B cell (primary cell): ENCODE measurements at regions of chr14 and their contacts with region 1.

Region 1: DNA sequence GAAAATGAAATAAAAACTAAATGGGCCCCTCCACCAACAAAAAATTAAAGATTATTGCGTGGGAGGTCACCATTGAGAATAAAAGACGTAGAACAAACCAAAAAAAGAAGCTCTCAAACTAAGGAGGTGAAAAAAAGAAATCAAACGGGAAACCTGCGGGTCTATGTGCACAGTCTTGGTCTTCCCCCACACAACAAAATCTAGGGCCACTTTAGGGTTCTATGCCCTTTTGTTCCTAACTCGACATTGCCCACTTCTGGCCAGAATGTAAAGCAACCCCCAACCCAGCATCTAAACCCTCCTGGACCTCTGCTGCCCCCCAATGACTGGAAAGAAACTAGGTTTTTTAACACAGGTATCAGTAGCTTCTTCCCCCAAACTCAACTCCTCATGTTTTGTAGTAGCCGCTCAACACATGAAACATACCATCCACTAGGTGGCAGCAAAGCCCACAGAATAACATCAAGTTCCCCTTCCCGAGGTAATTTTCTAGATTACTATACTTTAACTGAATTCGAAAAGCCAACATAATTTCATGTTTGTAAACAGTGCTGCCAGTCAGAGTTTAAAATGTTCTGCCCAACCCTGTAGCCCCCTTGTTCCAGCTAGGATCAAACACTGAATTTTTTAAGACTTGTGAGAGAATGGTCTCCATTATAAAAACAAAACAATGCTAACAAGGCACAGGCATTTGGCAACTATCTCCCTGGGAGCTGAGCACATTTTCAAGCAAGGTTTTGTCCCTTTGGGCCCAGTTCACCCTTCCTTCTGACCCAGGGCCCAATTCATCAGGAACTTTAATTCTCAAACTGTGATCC is 18.7 kb downstream of the DAD1 start:
- DNase-seq: peak; percentile 97
- ATAC-seq: peak; percentile 90
- H3K4me3 ChIP-seq: peak overlapping the region; percentile 25 to 60 (median 37)
- H3K4me3 Mint-ChIP-seq: peak overlapping the region; percentile 44
- H3K27ac ChIP-seq: peak overlapping the region; percentile 74 to 78
- H3K27ac Mint-ChIP-seq: peak overlapping the region; percentile 54
- H3K4me1 ChIP-seq: peaks cover 46 to 53% of the 10 kb centered on the region in 2 donors
- H3K4me1 Mint-ChIP-seq: peaks cover 47% of the 10 kb centered on the region
- H3K27me3 ChIP-seq: no peaks in the 10 kb centered on the region
- H3K27me3 Mint-ChIP-seq: no peaks in the 10 kb centered on the region
- CTCF ChIP-seq: peak; percentile 97

Region 2: DNA sequence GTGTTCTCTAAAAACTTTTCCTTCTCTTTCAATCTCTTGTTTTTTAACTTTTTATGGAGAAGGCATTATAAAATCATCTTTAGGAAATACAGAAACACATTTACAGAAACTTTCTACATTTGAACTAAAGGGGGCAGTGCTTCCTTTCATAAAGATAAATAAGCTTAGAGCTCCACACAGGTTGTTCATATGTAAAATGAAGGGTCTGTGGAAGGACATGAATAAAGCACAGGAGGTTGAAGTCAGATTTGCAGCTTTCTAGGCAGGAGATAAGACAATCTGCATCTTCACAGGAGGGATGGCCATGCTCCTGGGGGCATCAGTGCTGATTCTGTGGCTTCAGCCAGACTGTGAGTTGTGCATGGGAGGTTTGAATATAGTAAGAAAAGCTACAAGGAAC is 407.3 kb before region 1 on chr14:
- CTCF ChIA-PET with region 1: no interaction called
- POLR2A ChIA-PET with region 1: no interaction called
- intact Hi-C with region 1: no loop called
- DNase-seq: no peak
- ATAC-seq: no peak
- H3K4me3 ChIP-seq: no peak overlapping the region
- H3K4me3 Mint-ChIP-seq: no peak overlapping the region
- H3K27ac ChIP-seq: no peak overlapping the region
- H3K27ac Mint-ChIP-seq: no peak overlapping the region
- H3K4me1 ChIP-seq: no peaks in the 10 kb centered on the region
- H3K4me1 Mint-ChIP-seq: peaks cover 4% of the 10 kb centered on the region
- H3K27me3 ChIP-seq: peaks cover 0 to 2% (median under 1%) of the 10 kb centered on the region in 4 experiments
- H3K27me3 Mint-ChIP-seq: peaks cover 21% of the 10 kb centered on the region
- CTCF ChIP-seq: no peak

Region 3: GRCh38 chr14:22233377-22233776 is 337.0 kb before region 1 on chr14:
- CTCF ChIA-PET with region 1: no interaction called
- POLR2A ChIA-PET with region 1: no interaction called
- intact Hi-C with region 1: no loop called
- DNase-seq: no peak
- ATAC-seq: no peak
- H3K4me3 ChIP-seq: no peak overlapping the region
- H3K4me3 Mint-ChIP-seq: no peak overlapping the region
- H3K27ac ChIP-seq: no peak overlapping the region
- H3K27ac Mint-ChIP-seq: no peak overlapping the region
- H3K4me1 ChIP-seq: peaks cover 26 to 31% of the 10 kb centered on the region in 2 donors
- H3K4me1 Mint-ChIP-seq: peaks cover 34% of the 10 kb centered on the region
- H3K27me3 ChIP-seq: no peaks in the 10 kb centered on the region
- H3K27me3 Mint-ChIP-seq: peaks cover 4% of the 10 kb centered on the region
- CTCF ChIP-seq: no peak

Region 4: GRCh38 chr14:22386924-22387775 is 183.2 kb before region 1 on chr14:
- CTCF ChIA-PET with region 1: interaction called, 354 read pairs
- POLR2A ChIA-PET with region 1: interaction called, 11 read pairs
- intact Hi-C with region 1: loop called (anchors 1 kb)
- DNase-seq: peak; percentile 91
- ATAC-seq: peak; percentile 34
- H3K4me3 ChIP-seq: no peak overlapping the region
- H3K4me3 Mint-ChIP-seq: peak overlapping the region; percentile 69
- H3K27ac ChIP-seq: no peak overlapping the region
- H3K27ac Mint-ChIP-seq: peak overlapping the region; percentile 12
- H3K4me1 ChIP-seq: peaks cover 38 to 49% of the 10 kb centered on the region in 2 donors
- H3K4me1 Mint-ChIP-seq: peaks cover 82% of the 10 kb centered on the region
- H3K27me3 ChIP-seq: no peaks in the 10 kb centered on the region
- H3K27me3 Mint-ChIP-seq: no peaks in the 10 kb centered on the region
- CTCF ChIP-seq: peak; percentile 83

Region 5: DNA sequence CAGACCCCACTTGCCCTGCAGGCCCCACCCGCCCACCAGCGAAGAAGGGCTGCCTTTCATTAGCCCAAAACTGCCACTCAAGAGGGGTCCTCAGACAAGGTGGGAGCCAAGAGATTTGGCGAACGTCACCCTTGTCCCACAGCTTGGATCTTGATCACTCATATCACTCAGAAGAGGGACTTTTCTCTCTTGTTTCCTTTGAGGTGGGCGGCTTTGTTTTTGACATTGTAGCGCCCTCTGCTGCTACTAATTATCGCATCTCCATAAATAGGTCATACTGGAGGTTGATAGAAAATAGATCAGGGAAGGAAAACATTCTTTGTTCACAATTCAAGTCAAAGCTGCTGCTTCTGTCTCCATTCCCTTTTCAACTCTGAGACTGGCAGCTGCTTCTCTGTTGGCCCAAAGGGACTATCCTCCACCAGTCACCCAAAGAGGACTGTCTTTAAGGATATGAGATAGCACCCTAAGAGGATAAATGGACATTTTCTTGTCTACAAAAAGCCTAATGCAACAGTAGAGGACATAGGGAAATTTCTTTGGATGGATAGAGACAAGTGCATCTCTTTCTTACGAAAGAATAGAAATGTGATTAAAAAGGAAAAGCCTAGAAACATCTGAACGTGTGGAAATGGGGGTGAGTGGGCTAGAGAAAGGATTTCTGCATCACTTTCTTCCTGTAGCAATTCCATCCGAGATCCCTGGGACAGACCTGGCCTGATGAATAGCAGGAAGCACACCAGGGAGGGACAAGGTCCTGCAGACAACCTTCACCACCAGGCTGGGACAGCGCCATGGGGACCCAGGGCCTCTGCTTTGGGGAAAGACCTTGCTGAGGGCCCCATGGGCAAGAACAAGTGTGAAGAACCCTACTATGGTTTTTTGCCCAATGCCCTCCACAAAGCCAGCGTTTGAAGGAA is 97.1 kb before region 1 on chr14:
- CTCF ChIA-PET with region 1: interaction called, 177 read pairs
- POLR2A ChIA-PET with region 1: no interaction called
- intact Hi-C with region 1: loop called (anchors 1 kb)
- DNase-seq: peak; percentile 82
- ATAC-seq: peak; percentile 56
- H3K4me3 ChIP-seq: no peak overlapping the region
- H3K4me3 Mint-ChIP-seq: no peak overlapping the region
- H3K27ac ChIP-seq: no peak overlapping the region
- H3K27ac Mint-ChIP-seq: peak overlapping the region; percentile 75
- H3K4me1 ChIP-seq: peaks cover 60 to 74% of the 10 kb centered on the region in 2 donors
- H3K4me1 Mint-ChIP-seq: peaks cover 89% of the 10 kb centered on the region
- H3K27me3 ChIP-seq: no peaks in the 10 kb centered on the region
- H3K27me3 Mint-ChIP-seq: no peaks in the 10 kb centered on the region
- CTCF ChIP-seq: peak; percentile 77

Region 6: GRCh38 chr14:22556990-22557623 is 13.2 kb before region 1 on chr14:
- CTCF ChIA-PET with region 1: interaction called, 323 read pairs
- POLR2A ChIA-PET with region 1: interaction called, 43 read pairs
- intact Hi-C with region 1: loop called (anchors 1 kb)
- DNase-seq: peak; percentile 93
- ATAC-seq: peak; percentile 42
- H3K4me3 ChIP-seq: peak overlapping the region; percentile 7 to 71 (median 49)
- H3K4me3 Mint-ChIP-seq: peak overlapping the region; percentile 73
- H3K27ac ChIP-seq: peak overlapping the region; percentile 99 to 100
- H3K27ac Mint-ChIP-seq: peak overlapping the region; percentile 97
- H3K4me1 ChIP-seq: peaks cover 61 to 85% of the 10 kb centered on the region in 2 donors
- H3K4me1 Mint-ChIP-seq: peaks cover 84% of the 10 kb centered on the region
- H3K27me3 ChIP-seq: no peaks in the 10 kb centered on the region
- H3K27me3 Mint-ChIP-seq: peaks cover 3% of the 10 kb centered on the region
- CTCF ChIP-seq: peak; percentile 100

Region 7: DNA sequence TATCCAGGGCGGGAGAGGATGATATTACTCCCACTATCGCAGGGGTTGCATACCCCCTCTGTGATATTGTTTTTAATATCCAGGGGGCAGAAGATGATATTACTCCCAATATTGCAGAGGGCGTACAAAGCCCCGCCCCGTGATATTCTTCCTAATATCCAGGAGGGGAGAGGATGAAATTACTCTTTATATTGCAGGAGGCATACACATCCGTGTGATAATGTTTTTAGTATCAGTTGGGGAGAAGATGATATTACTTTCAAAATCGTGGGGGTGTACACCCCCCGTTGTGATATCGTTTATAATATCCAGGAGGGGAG is 143.2 kb after region 1 on chr14:
- CTCF ChIA-PET with region 1: interaction called, 6 read pairs
- POLR2A ChIA-PET with region 1: no interaction called
- intact Hi-C with region 1: loop called (anchors 2 kb)
- DNase-seq: no peak
- ATAC-seq: no peak
- H3K4me3 ChIP-seq: peak overlapping the region in 4 of 5 experiments; percentile 23 to 53 (median 45)
- H3K4me3 Mint-ChIP-seq: peak overlapping the region; percentile 90
- H3K27ac ChIP-seq: no peak overlapping the region
- H3K27ac Mint-ChIP-seq: no peak overlapping the region
- H3K4me1 ChIP-seq: peaks cover 5 to 6% of the 10 kb centered on the region in 2 donors
- H3K4me1 Mint-ChIP-seq: peaks cover 11% of the 10 kb centered on the region
- H3K27me3 ChIP-seq: peaks cover 0 to 21% (median 14%) of the 10 kb centered on the region in 4 experiments
- H3K27me3 Mint-ChIP-seq: peaks cover 33% of the 10 kb centered on the region
- CTCF ChIP-seq: no peak

Region 8: GRCh38 chr14:22872033-22872832 is 301.9 kb after region 1 on chr14:
- CTCF ChIA-PET with region 1: interaction called, 17 read pairs
- POLR2A ChIA-PET with region 1: no interaction called
- intact Hi-C with region 1: no loop called
- DNase-seq: peak; percentile 83
- ATAC-seq: peak; percentile 22
- H3K4me3 ChIP-seq: peak overlapping the region; percentile 79 to 97 (median 92)
- H3K4me3 Mint-ChIP-seq: peak overlapping the region; percentile 96
- H3K27ac ChIP-seq: peak overlapping the region; percentile 84 to 88
- H3K27ac Mint-ChIP-seq: peak overlapping the region; percentile 98
- H3K4me1 ChIP-seq: peaks cover 19 to 35% of the 10 kb centered on the region in 2 donors
- H3K4me1 Mint-ChIP-seq: peaks cover 34% of the 10 kb centered on the region
- H3K27me3 ChIP-seq: no peaks in the 10 kb centered on the region
- H3K27me3 Mint-ChIP-seq: no peaks in the 10 kb centered on the region
- CTCF ChIP-seq: peak; percentile 90

Region 9: DNA sequence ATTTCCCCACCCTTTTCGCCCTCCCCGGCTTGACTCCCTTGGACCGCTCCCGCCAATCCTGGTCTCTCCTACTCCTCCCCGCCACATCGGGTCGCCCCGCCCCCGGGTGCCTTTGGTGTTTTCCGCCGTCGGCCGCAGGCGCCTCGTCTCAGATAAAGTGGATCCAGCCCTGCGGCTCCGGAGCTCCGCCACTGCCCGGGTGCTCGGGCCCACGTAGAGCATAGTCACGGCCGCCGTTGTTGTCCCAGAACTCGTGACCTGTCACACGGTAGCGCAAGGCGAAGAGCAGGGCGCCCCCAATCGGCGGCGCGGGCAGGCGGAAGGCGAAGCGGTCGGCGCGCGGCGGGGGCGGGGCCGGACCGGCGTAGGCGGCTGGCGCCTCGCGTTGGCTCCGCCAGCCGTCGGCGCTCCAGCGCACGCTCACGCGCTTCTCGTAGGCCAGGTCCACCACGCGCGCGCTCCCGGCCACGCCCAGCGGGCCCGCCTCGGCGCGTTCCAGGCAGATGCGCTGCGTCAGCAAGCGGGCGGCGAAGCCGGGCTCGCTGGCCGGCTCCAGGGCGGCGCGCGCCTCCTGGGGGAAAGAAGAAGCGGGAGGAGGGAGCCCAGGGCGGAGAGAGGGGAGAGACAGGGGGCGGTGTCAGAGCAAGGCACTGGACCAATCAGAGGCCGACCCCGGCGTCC is 731.1 kb after region 1 on chr14:
- CTCF ChIA-PET with region 1: no interaction called
- POLR2A ChIA-PET with region 1: no interaction called
- intact Hi-C with region 1: loop called (anchors 5 kb)
- DNase-seq: peak; percentile 100
- ATAC-seq: peak; percentile 75
- H3K4me3 ChIP-seq: peak overlapping the region in 4 of 5 experiments; percentile 72 to 86 (median 82)
- H3K4me3 Mint-ChIP-seq: peak overlapping the region; percentile 98
- H3K27ac ChIP-seq: peak overlapping the region; percentile 95 to 96
- H3K27ac Mint-ChIP-seq: peak overlapping the region; percentile 95
- H3K4me1 ChIP-seq: peaks cover 24 to 26% of the 10 kb centered on the region in 2 donors
- H3K4me1 Mint-ChIP-seq: peaks cover 34% of the 10 kb centered on the region
- H3K27me3 ChIP-seq: no peaks in the 10 kb centered on the region
- H3K27me3 Mint-ChIP-seq: no peaks in the 10 kb centered on the region
- CTCF ChIP-seq: peak; percentile 81